Gastrocnemius medialis (tissue), 4 donors: ENCODE measurements at regions of chr14 and their contacts with region 1.

Region 1: GRCh38 chr14:52824507-52824906 is 33.1 kb upstream of the GNPNAT1 start:
- DNase-seq: no peak
- ATAC-seq: no peak
- H3K4me3 ChIP-seq: no peak overlapping the region
- H3K27ac ChIP-seq: no peak overlapping the region
- H3K4me1 ChIP-seq: no peaks in the 10 kb centered on the region
- H3K27me3 ChIP-seq: no peaks in the 10 kb centered on the region
- CTCF ChIP-seq: no peak
- POLR2A ChIP-seq: no peak

Region 2: GRCh38 chr14:52602131-52602530 is 222.4 kb before region 1 on chr14:
- in situ Hi-C with region 1: no loop called
- intact Hi-C with region 1: no loop called
- DNase-seq: no peak
- ATAC-seq: no peak
- H3K4me3 ChIP-seq: no peak overlapping the region
- H3K27ac ChIP-seq: no peak overlapping the region
- H3K4me1 ChIP-seq: no peaks in the 10 kb centered on the region
- H3K27me3 ChIP-seq: no peaks in the 10 kb centered on the region
- CTCF ChIP-seq: no peak
- POLR2A ChIP-seq: no peak

Region 3: DNA sequence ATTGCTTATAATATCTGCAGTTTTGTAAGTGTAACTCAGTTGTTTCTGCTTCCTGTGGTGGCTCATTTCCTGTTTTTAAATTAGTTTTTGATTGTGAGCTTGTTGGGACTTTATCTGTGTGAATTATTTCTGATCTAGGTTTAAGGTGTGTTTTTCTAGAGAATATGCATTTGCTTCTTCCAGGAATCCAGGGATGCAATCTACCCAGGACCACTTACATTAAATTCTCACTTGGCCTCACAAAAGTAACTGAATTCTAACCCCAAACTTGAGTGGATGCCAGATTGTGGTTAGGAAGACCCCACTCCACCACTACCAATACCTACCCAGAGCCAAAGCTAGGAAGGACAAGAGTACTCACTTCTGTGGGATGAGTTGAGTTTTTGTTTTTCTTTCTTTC is 82.6 kb before region 1 on chr14:
- in situ Hi-C with region 1: no loop called
- intact Hi-C with region 1: no loop called
- DNase-seq: no peak
- ATAC-seq: no peak
- H3K4me3 ChIP-seq: no peak overlapping the region
- H3K27ac ChIP-seq: peak overlapping the region in 3 of 4 donors; percentile 0 to 51 (median 51)
- H3K4me1 ChIP-seq: peaks cover 5 to 9% of the 10 kb centered on the region in 2 donors
- H3K27me3 ChIP-seq: no peaks in the 10 kb centered on the region
- CTCF ChIP-seq: no peak
- POLR2A ChIP-seq: no peak

Region 4: GRCh38 chr14:52961060-52961639 is 136.6 kb after region 1 on chr14:
- in situ Hi-C with region 1: loop called (anchors 5 kb)
- intact Hi-C with region 1: loop called (anchors 1 kb)
- DNase-seq: peak; percentile 49 to 60
- ATAC-seq: peak; percentile 88 to 97
- H3K4me3 ChIP-seq: no peak overlapping the region
- H3K27ac ChIP-seq: peak overlapping the region; percentile 39 to 58 (median 50)
- H3K4me1 ChIP-seq: peaks cover 0 to 3% of the 10 kb centered on the region in 2 donors
- H3K27me3 ChIP-seq: no peaks in the 10 kb centered on the region
- CTCF ChIP-seq: peak; percentile 70 to 76 (median 74)
- POLR2A ChIP-seq: no peak

Region 5: GRCh38 chr14:53055003-53055402 is 230.5 kb after region 1 on chr14:
- in situ Hi-C with region 1: loop called (anchors 5 to 10 kb)
- intact Hi-C with region 1: loop called (anchors 1 kb)
- DNase-seq: no peak
- ATAC-seq: peak in 1 of 2 donors; percentile 74
- H3K4me3 ChIP-seq: no peak overlapping the region
- H3K27ac ChIP-seq: no peak overlapping the region
- H3K4me1 ChIP-seq: no peaks in the 10 kb centered on the region
- H3K27me3 ChIP-seq: no peaks in the 10 kb centered on the region
- CTCF ChIP-seq: peak in 4 of 5 experiments; percentile 35 to 72 (median 60)
- POLR2A ChIP-seq: no peak

Region 6: GRCh38 chr14:53306267-53306721 is 481.8 kb after region 1 on chr14:
- in situ Hi-C with region 1: loop called in 1 of 4 experiments (anchors 25 kb)
- intact Hi-C with region 1: loop called (anchors 10 kb)
- DNase-seq: no peak
- ATAC-seq: peak; percentile 62 to 75
- H3K4me3 ChIP-seq: peak overlapping the region; percentile 42 to 57 (median 48)
- H3K27ac ChIP-seq: peak overlapping the region; percentile 31 to 45 (median 34)
- H3K4me1 ChIP-seq: peaks cover 0 to 10% of the 10 kb centered on the region in 2 donors
- H3K27me3 ChIP-seq: no peaks in the 10 kb centered on the region
- CTCF ChIP-seq: peak; percentile 63 to 72 (median 69)
- POLR2A ChIP-seq: no peak